PC-3 (cell line): ENCODE measurements at regions of chr7 and their contacts with region 1.

Region 1: GRCh38 chr7:155709453-155709852 is 65.0 kb downstream of the RBM33 start:
- DNase-seq: no peak
- ATAC-seq: no peak
- H3K4me3 ChIP-seq: no peak overlapping the region
- H3K27ac ChIP-seq: no peak overlapping the region
- H3K4me1 ChIP-seq: no peaks in the 10 kb centered on the region
- H3K27me3 ChIP-seq: no peaks in the 10 kb centered on the region
- CTCF ChIP-seq: no peak

Region 2: GRCh38 chr7:155656891-155657290 is 52.6 kb before region 1 on chr7:
- CTCF ChIA-PET with region 1: no interaction called
- POLR2A ChIA-PET with region 1: no interaction called
- intact Hi-C with region 1: no loop called
- DNase-seq: no peak
- ATAC-seq: no peak
- H3K4me3 ChIP-seq: no peak overlapping the region
- H3K27ac ChIP-seq: no peak overlapping the region
- H3K4me1 ChIP-seq: peaks cover 14% of the 10 kb centered on the region
- H3K27me3 ChIP-seq: no peaks in the 10 kb centered on the region
- CTCF ChIP-seq: no peak

Region 3: DNA sequence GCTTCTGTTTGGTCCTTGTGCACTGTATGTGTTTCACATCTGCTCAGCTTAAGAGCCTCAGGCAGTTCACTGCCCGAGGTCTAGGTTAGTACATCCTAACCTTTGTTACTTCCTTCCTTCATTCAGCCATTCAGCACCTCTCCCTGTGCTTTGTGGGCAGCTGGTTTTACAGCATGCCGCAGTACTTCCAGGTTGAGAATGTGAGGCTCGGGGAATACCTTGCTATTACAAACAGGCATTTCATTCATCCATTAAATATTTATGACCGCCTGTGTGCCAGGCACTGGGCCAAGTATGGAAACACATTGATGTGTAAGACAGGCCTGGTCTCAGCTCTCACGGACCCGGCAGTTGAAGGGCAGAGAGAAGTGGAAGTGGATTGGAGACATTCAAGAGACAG is 20.4 kb after region 1 on chr7:
- CTCF ChIA-PET with region 1: no interaction called
- POLR2A ChIA-PET with region 1: no interaction called
- intact Hi-C with region 1: no loop called
- DNase-seq: peak; percentile 60
- ATAC-seq: peak; percentile 52
- H3K4me3 ChIP-seq: no peak overlapping the region
- H3K27ac ChIP-seq: 0 out of 2 replicates have a peak overlapping the region, but pooled peaks have one; percentile 10
- H3K4me1 ChIP-seq: peaks cover 28% of the 10 kb centered on the region
- H3K27me3 ChIP-seq: no peaks in the 10 kb centered on the region
- CTCF ChIP-seq: no peak

Region 4: DNA sequence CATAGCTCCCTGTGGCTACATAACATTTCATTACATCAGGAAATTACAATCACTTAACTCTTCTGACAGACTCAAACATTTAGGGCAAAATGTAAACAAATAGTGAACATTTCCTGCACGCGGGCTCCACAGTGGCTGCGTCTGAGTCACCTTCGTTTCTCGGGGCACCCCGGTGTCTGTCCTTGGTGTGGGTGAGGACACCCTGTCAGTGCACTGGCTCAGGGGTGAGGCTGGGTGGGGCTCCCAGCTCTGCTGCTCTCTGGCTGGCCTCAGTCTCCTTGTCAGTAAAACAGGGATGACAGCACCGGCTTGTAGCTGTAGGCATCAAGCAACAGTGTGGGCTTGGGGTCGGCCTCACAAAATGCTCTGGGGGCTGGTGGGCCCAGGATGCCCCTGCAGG is 339.9 kb after region 1 on chr7:
- CTCF ChIA-PET with region 1: no interaction called
- POLR2A ChIA-PET with region 1: interaction called, 11 read pairs
- intact Hi-C with region 1: no loop called
- DNase-seq: no peak
- ATAC-seq: no peak
- H3K4me3 ChIP-seq: no peak overlapping the region
- H3K27ac ChIP-seq: no peak overlapping the region
- H3K4me1 ChIP-seq: no peaks in the 10 kb centered on the region
- H3K27me3 ChIP-seq: no peaks in the 10 kb centered on the region; the same call in 1 of the 2 replicates
- CTCF ChIP-seq: no peak